ENCODE measurements at regions of chr4 and their contacts with region 1.

Region 1: DNA sequence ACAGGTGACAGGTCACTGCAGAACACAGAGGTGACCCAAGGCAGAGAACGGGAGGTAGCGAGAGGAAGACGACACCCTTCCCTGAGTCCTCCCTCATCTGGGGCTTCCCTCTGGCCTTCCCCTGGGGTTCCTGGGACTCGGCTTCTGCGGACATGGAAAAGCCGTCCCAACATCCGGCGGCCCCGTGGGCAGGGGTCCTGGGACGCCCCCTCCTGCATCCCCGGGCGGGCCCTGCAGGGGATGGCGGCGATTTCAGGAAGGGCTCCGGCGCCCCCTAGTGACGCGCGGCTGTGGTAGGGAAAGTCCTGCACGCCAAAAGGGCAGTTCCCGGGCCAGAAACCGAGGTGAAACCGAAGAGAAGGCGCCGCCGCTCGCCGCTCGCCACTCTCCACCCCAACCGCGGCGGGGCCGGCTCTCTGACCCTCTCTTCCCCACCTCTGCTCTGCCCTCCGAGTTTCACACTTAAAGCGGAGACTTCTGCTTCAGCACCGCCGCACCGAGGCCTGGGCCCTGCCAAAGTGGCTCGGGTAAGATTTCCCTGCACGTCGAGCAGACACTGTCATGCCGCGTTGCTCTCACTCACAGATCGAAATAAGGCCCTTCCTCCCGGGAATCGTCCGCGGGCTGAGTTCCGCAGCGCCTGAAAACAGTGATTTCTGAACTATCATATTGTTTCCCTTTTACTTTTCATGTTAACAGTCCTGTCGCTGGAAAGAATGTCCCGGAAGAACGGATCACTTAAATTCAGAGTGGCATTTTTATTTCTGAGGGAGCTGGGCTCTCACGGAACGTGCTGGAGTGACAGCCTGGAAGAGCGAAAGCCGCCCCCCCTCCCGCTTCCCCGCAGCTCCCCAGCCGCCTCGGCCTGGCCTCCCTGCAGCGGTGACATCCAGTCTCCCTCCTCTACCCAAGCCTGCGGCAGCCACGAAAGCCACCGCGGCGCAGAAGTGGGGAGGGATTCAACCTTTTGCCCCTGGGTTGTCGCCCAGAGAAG is 110.6 kb downstream of the DCTD start:
- DNase-seq: peak; percentile 51
- H3K4me3 ChIP-seq: peak overlapping the region in 2 of 3 experiments; percentile 35 to 45
- H3K27ac ChIP-seq: no peak overlapping the region
- H3K4me1 ChIP-seq: no peaks in the 10 kb centered on the region
- H3K27me3 ChIP-seq: no peaks in the 10 kb centered on the region
- CTCF ChIP-seq: peak; percentile 49 to 94

Region 2: DNA sequence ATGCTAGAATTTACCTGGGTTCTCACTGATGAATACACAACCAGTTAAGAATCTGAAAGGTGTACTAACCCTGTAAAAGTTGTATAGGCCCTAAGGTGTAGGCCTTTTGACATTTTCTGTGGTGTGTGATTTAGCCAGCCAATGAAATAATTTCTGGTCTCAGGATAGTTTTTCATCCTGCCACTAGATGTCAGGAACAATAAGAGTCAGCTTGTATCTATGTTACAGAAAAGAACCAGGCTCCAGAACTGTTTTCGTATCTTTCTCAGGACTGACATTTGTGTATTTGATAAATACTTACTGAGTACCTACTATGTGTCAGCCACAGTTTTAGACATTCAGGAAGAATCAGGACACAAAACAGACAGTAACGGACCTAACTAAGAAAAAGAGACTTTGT is 1237.0 kb before region 1 on chr4:
- CTCF ChIA-PET with region 1: no interaction called
- dilution Hi-C with region 1: no loop called
- in situ Hi-C with region 1: no loop called
- intact Hi-C with region 1: loop called (anchors 2 kb)
- DNase-seq: peak; percentile 46
- H3K4me3 ChIP-seq: no peak overlapping the region
- H3K27ac ChIP-seq: no peak overlapping the region
- H3K4me1 ChIP-seq: no peaks in the 10 kb centered on the region
- H3K27me3 ChIP-seq: no peaks in the 10 kb centered on the region
- CTCF ChIP-seq: peak; percentile 57 to 71

Region 3: DNA sequence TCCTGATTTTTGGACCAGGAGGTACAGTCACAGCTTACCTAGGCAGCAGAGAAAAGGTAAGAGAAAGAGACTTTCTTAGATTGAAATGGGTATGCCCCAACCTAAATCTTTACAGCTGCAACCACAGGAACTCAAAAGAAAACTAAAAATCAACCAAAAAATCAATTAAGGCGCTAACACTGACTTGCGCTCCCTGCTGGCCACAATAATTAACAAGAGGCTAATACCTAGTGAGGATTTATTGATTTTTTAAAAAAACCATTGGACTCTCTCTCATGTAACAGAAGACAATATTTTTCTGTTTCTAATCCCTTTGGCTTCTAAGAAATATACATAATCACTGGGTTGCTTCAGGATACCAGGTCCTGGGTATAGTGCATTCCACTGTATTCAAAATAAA is 717.2 kb before region 1 on chr4:
- CTCF ChIA-PET with region 1: no interaction called
- dilution Hi-C with region 1: no loop called
- in situ Hi-C with region 1: no loop called
- intact Hi-C with region 1: loop called (anchors 10 kb)
- DNase-seq: no peak
- H3K4me3 ChIP-seq: no peak overlapping the region
- H3K27ac ChIP-seq: no peak overlapping the region
- H3K4me1 ChIP-seq: no peaks in the 10 kb centered on the region
- H3K27me3 ChIP-seq: no peaks in the 10 kb centered on the region
- CTCF ChIP-seq: peak; percentile 13 to 27

Region 4: DNA sequence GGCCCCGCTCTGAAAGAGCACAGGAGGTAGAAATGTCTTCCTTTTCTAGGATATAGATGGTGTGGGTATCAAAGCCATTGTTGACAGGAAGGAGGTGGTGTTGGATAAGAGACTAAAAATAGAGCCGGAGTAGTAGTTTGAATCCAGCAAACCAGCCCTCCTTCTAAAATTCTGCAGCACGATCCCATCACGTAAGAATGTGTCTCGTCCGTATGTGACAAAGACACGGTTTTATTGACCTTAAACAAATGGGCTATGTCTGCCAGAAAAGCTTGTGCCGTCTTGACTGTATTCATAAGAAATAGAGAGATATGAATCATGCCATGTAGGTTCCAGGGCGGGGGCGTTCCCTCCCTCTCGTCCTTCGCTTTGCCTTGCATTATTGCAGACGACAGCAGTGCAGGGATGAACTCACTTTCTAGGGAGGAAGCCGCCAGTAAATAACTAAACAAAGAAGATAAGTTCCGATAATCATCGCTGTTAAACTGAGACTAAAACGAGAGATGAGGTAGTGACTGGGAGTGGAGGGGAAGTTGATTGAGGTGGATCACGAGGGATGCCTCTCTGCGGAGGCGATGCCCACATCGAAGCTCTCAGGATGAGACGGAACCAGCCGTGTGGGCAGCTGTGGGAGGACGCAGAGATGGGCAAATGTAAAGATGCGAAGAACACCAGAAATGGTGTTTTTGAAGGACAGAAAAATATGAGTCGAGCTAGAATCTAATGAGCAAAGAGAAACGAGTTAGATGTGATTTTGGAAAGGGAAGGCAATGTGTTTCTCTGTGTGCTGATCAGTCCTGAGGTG is 560.0 kb before region 1 on chr4:
- CTCF ChIA-PET with region 1: no interaction called
- dilution Hi-C with region 1: no loop called
- in situ Hi-C with region 1: no loop called
- intact Hi-C with region 1: loop called (anchors 5 kb)
- DNase-seq: peak; percentile 86
- H3K4me3 ChIP-seq: peak overlapping the region; percentile 37 to 42 (median 38)
- H3K27ac ChIP-seq: peak overlapping the region; percentile 75
- H3K4me1 ChIP-seq: peaks cover 47% of the 10 kb centered on the region
- H3K27me3 ChIP-seq: no peaks in the 10 kb centered on the region
- CTCF ChIP-seq: no peak

Region 5: DNA sequence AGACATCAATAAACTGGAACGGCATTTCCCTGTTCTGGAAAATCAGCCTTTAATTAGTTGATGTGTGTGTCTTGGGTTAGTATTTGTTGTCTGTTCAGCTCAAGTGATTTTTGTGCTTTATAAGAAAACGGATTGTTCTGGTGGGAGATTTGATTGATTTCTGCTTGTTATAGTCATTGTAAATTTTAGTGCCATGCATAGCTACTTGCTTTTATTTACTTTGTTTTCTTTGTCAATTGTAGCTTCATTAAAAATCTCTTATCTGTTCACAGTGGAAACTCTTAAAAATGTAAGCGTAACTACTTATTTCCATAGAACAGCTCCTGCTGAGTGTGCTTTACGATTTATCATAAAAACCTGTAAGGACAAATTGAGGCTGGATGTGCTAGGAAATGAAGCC is 310.1 kb before region 1 on chr4:
- CTCF ChIA-PET with region 1: interaction called, 14 read pairs
- dilution Hi-C with region 1: no loop called
- in situ Hi-C with region 1: no loop called
- intact Hi-C with region 1: no loop called
- DNase-seq: no peak
- H3K4me3 ChIP-seq: no peak overlapping the region
- H3K27ac ChIP-seq: no peak overlapping the region
- H3K4me1 ChIP-seq: no peaks in the 10 kb centered on the region
- H3K27me3 ChIP-seq: no peaks in the 10 kb centered on the region
- CTCF ChIP-seq: no peak

Region 6: DNA sequence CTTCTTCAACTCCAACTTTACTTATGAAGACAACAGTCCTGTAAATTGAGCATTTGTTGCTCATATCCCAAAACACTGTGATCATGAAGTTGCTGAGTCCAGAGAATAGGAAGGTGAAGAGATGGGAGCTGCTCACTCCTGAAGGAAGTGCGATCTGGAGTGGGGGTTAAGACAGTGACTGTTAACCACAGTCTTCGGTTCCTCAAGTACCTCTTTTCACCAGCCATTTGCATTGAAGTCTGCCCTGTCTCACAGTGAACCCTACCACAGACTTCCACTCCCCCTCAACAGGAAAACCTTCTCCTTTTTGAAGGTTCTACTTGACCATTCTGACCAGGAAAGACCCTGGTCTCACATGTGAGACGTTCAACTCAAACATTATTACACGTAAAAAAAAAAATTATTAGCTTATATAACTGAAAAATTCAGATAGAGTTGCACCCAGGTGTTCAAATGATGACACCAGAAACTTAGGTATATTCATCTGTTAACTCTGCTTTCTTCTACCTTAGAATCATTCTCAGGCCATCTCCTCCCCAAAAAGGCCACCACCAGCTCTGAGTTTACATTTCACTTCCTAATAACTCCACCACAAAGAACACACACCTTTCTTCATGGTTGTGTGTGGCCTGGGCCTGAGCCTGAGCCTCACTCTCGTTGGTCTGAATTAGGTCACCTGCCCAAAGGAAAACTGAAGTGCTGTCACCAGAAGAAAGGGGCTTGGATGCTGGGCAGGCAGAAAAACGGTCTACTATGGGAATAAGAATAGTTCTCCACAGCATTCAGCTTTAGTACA is 88.6 kb before region 1 on chr4:
- CTCF ChIA-PET with region 1: no interaction called
- dilution Hi-C with region 1: no loop called
- in situ Hi-C with region 1: no loop called
- intact Hi-C with region 1: no loop called
- DNase-seq: no peak
- H3K4me3 ChIP-seq: no peak overlapping the region
- H3K27ac ChIP-seq: no peak overlapping the region
- H3K4me1 ChIP-seq: no peaks in the 10 kb centered on the region
- H3K27me3 ChIP-seq: no peaks in the 10 kb centered on the region
- CTCF ChIP-seq: no peak

Region 7: GRCh38 chr4:182745240-182745639 is 61.3 kb before region 1 on chr4:
- CTCF ChIA-PET with region 1: no interaction called
- dilution Hi-C with region 1: no loop called
- in situ Hi-C with region 1: no loop called
- intact Hi-C with region 1: no loop called
- DNase-seq: peak; percentile 80
- H3K4me3 ChIP-seq: no peak overlapping the region
- H3K27ac ChIP-seq: no peak overlapping the region
- H3K4me1 ChIP-seq: peaks cover 17% of the 10 kb centered on the region
- H3K27me3 ChIP-seq: no peaks in the 10 kb centered on the region
- CTCF ChIP-seq: no peak

Region 8: GRCh38 chr4:182944484-182945213 is 138.1 kb after region 1 on chr4:
- CTCF ChIA-PET with region 1: no interaction called
- dilution Hi-C with region 1: no loop called
- in situ Hi-C with region 1: no loop called
- intact Hi-C with region 1: no loop called
- DNase-seq: no peak
- H3K4me3 ChIP-seq: no peak overlapping the region
- H3K27ac ChIP-seq: no peak overlapping the region
- H3K4me1 ChIP-seq: no peaks in the 10 kb centered on the region
- H3K27me3 ChIP-seq: peaks cover 7% of the 10 kb centered on the region
- CTCF ChIP-seq: no peak

Measured in mammary epithelial cell (primary cell).